Heart left ventricle (tissue), 16 donors: ENCODE measurements at regions of chr6 and their contacts with region 1.

Region 1: GRCh38 chr6:117733341-117733740 is 58.1 kb downstream of the NUS1 start:
- DNase-seq: no peak
- ATAC-seq: no peak
- H3K4me3 ChIP-seq: no peak overlapping the region
- H3K27ac ChIP-seq: no peak overlapping the region
- H3K4me1 ChIP-seq: no peaks in the 10 kb centered on the region
- H3K27me3 ChIP-seq: no peaks in the 10 kb centered on the region
- CTCF ChIP-seq: no peak
- POLR2A ChIP-seq: no peak

Region 2: DNA sequence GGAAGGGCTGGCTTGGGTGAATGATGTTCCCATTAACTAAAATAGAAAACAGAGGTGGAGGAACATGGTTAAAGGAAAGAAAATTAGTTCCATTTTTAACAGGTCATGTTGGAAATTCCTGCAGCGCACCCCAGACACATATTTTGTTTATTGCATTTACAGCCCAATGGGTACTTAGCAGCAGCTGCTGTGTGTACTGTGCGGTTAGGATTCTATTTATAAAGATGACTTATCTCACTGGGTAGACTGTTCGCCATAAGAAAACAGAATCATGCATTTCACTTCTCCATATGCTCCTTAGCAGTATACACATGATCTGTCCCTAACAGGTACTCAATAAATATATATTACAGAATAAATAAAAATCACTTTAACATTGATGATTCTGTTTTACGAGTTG is 309.5 kb after region 1 on chr6:
- intact Hi-C with region 1: loop called in 1 of 10 experiments (anchors 10 kb)
- DNase-seq: no peak
- ATAC-seq: peak in 3 of 4 donors; percentile 42 to 52 (median 52)
- H3K4me3 ChIP-seq: no peak overlapping the region
- H3K27ac ChIP-seq: no peak overlapping the region
- H3K4me1 ChIP-seq: no peaks in the 10 kb centered on the region
- H3K27me3 ChIP-seq: no peaks in the 10 kb centered on the region
- CTCF ChIP-seq: no peak
- POLR2A ChIP-seq: no peak